K562 (cell line): ENCODE measurements at regions of chr4 and their contacts with region 1.

Region 1: DNA sequence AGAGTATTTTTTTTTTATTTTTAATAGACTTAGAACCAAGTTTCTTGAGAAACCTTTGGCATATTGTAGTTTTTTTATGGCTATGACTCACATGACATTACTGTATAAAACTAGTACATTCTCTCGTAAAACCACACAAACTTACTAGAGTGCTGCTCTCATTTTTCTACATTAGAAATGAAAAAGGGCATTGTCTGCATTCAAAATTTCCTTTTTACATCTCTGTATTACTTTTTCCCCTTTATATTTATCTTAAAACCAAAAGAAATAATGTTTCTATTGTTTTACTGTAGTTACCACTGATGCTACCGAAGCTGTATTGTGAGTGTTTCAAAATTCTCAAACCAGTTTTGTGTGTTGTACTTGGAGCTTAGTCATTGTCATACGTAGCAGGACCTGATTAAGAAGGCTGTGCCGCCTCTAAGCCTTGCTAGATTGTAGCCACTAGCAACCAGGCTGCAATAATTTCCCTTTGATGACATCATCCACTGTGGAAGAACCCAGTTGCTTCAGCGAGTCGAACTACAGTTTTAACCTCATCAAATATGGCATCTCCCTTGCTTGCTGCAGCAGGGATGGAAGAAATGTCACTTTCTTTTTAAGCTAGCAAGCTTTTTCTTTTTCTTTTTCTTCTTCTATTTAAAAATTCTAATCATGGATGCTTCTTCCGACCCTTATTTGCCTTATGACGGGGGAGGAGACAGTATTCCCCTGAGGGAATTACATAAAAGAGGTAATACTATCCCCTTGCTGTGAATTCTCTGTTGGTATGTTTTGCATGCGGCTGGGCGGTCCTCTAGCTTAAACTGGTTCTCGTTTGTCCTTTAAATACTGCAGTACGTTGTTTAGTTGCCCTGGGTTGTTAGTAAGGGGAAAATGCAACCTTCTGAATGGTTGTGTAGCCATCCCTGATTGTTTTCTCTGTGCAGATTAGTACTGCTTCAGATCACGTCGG is 39.6 kb downstream of the CLCN3 start:
- DNase-seq: peak; percentile 83 to 97 (median 88)
- ATAC-seq: peak; percentile 79
- H3K4me3 ChIP-seq: peak overlapping the region; percentile 51
- H3K27ac ChIP-seq: peak overlapping the region; percentile 93
- H3K4me1 ChIP-seq: peaks cover 0 to 5% of the 10 kb centered on the region in 2 experiments; a peak in 3 of 5 replicates
- H3K27me3 ChIP-seq: no peaks in the 10 kb centered on the region
- CTCF ChIP-seq: no peak
- EP300 ChIP-seq: peak; percentile 91
- POLR2A ChIP-seq: peak; percentile 95
- RAD21 ChIP-seq: peak in 1 of 2 experiments; percentile 13; a peak in 2 of 4 replicates

Region 2: DNA sequence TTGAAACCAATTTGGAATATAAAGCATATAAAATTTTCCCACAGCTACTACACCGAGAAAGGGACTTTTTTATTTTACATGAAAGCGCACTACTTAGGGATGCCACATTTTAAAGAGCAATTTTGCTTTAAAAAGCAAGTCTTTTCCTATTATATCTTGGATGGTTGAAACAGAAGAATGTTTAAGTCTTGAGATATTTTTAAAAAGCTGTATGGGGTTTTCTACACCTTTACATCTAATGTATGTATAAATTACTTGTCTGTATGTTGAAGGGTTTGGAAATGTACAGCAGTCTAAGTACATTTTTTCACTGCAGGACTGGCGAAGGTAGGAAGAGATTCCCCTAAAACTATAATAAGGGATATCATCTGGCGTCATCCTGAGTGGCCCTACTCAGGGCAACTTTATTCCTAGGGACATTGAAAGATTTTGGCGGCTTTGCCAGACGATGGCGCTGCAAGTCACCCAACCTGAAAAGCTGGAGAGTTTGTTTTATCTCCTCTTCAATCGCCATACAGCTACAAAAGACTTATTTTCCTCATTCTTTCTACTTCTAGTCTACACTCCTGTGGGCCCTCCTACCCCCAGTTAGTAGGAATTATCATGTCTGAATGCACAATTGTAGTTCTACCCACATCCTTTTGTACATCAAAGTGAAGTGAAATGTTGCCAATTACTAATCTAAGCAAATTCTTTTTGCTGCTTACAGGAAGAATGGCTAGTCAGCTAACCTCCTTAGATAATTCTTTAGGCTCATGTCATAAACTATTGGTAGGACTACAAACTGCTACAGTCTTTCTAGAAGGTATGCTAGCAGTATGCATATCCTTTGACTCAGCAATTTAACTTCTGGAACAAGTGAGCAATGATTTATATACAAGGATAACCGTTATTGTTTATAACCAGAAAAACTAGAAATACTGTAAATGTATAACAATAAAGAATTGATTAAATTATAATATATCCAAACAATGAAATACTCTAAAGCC is 46.8 kb before region 1 on chr4:
- CTCF ChIA-PET with region 1: no interaction called
- POLR2A ChIA-PET with region 1: interaction called, 21 read pairs
- in situ Hi-C with region 1: no loop called
- intact Hi-C with region 1: loop called (anchors 2 kb)
- DNase-seq: peak; percentile 31 to 89 (median 51)
- ATAC-seq: peak; percentile 49
- H3K4me3 ChIP-seq: peak overlapping the region; percentile 80
- H3K27ac ChIP-seq: peak overlapping the region; percentile 64
- H3K4me1 ChIP-seq: peaks cover 11 to 27% of the 10 kb centered on the region in 2 experiments
- H3K27me3 ChIP-seq: no peaks in the 10 kb centered on the region
- CTCF ChIP-seq: peak; percentile 71 to 91 (median 83)
- EP300 ChIP-seq: no peak
- POLR2A ChIP-seq: no peak
- RAD21 ChIP-seq: peak; percentile 76

Region 3: GRCh38 chr4:169619959-169620879 is 39.8 kb before region 1 on chr4 and contains the start of gene CLCN3:
- CTCF ChIA-PET with region 1: no interaction called
- POLR2A ChIA-PET with region 1: interaction called, 51 read pairs
- in situ Hi-C with region 1: loop called (anchors 5 kb)
- intact Hi-C with region 1: loop called (anchors 1 kb)
- DNase-seq: peak; percentile 94 to 99 (median 96)
- ATAC-seq: peak; percentile 91
- H3K4me3 ChIP-seq: peak within 1 kb of the TSS; percentile 53
- H3K27ac ChIP-seq: peak within 1 kb of the TSS; percentile 98
- H3K4me1 ChIP-seq: peaks cover 4 to 31% of the 10 kb centered on the region in 2 experiments; a peak in 4 of 5 replicates
- H3K27me3 ChIP-seq: no peaks in the 10 kb centered on the region
- CTCF ChIP-seq: peak in 1 of 3 experiments; percentile 11; a peak in 1 of 6 replicates
- EP300 ChIP-seq: peak; percentile 35
- POLR2A ChIP-seq: peak; percentile 95
- RAD21 ChIP-seq: peak; percentile 5 to 17; a peak in 2 of 4 replicates
- polyA plus RNA-seq, gene CLCN3: 12.7 to 22.8 TPM

Region 4: GRCh38 chr4:169627307-169627706 is 32.7 kb before region 1 on chr4:
- CTCF ChIA-PET with region 1: no interaction called
- POLR2A ChIA-PET with region 1: interaction called, 51 read pairs
- in situ Hi-C with region 1: loop called (anchors 5 kb)
- intact Hi-C with region 1: loop called (anchors 1 kb)
- DNase-seq: no peak
- ATAC-seq: no peak
- H3K4me3 ChIP-seq: no peak overlapping the region
- H3K27ac ChIP-seq: peak overlapping the region; percentile 66
- H3K4me1 ChIP-seq: peaks cover 13 to 36% of the 10 kb centered on the region in 2 experiments
- H3K27me3 ChIP-seq: no peaks in the 10 kb centered on the region
- CTCF ChIP-seq: no peak
- EP300 ChIP-seq: no peak
- POLR2A ChIP-seq: no peak
- RAD21 ChIP-seq: no peak

Region 5: GRCh38 chr4:169649545-169650226 is 10.3 kb before region 1 on chr4:
- CTCF ChIA-PET with region 1: no interaction called
- POLR2A ChIA-PET with region 1: interaction called, 46 read pairs
- in situ Hi-C with region 1: no loop called
- intact Hi-C with region 1: no loop called
- DNase-seq: peak in 2 of 4 experiments; percentile 19 to 78
- ATAC-seq: peak; percentile 86
- H3K4me3 ChIP-seq: no peak overlapping the region
- H3K27ac ChIP-seq: peak overlapping the region; percentile 70
- H3K4me1 ChIP-seq: peaks cover 4 to 20% of the 10 kb centered on the region in 2 experiments; a peak in 3 of 5 replicates
- H3K27me3 ChIP-seq: no peaks in the 10 kb centered on the region
- CTCF ChIP-seq: no peak
- EP300 ChIP-seq: peak; percentile 78; the same call in 1 of the 2 replicates
- POLR2A ChIP-seq: no peak
- RAD21 ChIP-seq: no peak

Region 6: GRCh38 chr4:169757575-169758184 is 97.7 kb after region 1 on chr4 and contains the start of gene HPF1:
- CTCF ChIA-PET with region 1: no interaction called
- POLR2A ChIA-PET with region 1: no interaction called
- in situ Hi-C with region 1: no loop called
- intact Hi-C with region 1: loop called (anchors 5 kb)
- DNase-seq: peak; percentile 97 to 98 (median 98)
- ATAC-seq: peak; percentile 94
- H3K4me3 ChIP-seq: peak within 1 kb of the TSS; percentile 85
- H3K27ac ChIP-seq: peak within 1 kb of the TSS; percentile 78
- H3K4me1 ChIP-seq: peaks cover 5 to 11% of the 10 kb centered on the region in 2 experiments; a peak in 3 of 5 replicates
- H3K27me3 ChIP-seq: no peaks in the 10 kb centered on the region
- CTCF ChIP-seq: 0 out of 6 replicates have a peak, but pooled peaks of 2 of the 3 experiments have one; percentile 8 to 11
- EP300 ChIP-seq: no peak
- POLR2A ChIP-seq: peak; percentile 72
- RAD21 ChIP-seq: no peak
- polyA plus RNA-seq, gene HPF1: 33.5 to 35.2 TPM